ENCODE measurements at regions of chr12 and their contacts with region 1.

Region 1: GRCh38 chr12:1644534-1645438 is 15.8 kb downstream of the WNT5B start:
- DNase-seq: peak in 4 of 5 donors; percentile 56 to 91 (median 75)
- H3K4me3 ChIP-seq: no peak overlapping the region
- H3K27ac ChIP-seq: no peak overlapping the region
- H3K4me1 ChIP-seq: peaks cover 0 to 3% (median 0%) of the 10 kb centered on the region in 3 donors
- H3K27me3 ChIP-seq: no peaks in the 10 kb centered on the region
- CTCF ChIP-seq: no peak

Region 2: DNA sequence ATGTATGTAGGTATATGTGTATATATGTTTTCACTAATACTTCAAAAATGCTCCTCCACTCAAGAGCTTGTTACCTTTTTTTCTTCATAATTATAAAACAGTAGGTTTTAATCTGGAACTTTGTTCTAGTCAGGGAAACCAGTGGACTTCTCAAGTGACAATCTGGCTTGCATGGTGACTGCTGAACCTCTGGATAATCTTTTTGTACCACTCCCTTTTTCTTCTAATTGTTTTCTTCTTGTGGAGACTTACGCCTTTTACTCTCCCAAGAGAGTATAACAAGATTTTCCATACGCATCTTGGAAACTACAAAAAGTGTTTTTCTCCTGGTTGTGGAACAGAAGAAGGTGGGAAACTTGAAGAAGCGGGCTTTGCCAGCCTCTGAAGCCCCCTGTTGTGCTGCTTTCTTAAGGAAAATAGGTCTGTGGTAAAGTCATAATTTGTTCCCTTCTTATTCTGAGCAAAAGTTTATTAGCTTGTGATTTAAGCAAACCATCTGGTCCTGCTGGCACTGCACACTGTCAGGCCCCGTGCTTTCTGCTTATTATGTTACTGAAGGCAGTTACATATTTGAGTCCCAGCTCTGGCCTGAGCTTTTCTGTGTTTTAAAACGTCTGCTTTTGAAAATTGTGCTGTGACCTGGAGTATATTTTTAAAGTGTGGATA is 362.0 kb before region 1 on chr12:
- intact Hi-C with region 1: no loop called
- DNase-seq: peak in 2 of 5 donors; percentile 11 to 69
- H3K4me3 ChIP-seq: no peak overlapping the region
- H3K27ac ChIP-seq: no peak overlapping the region
- H3K4me1 ChIP-seq: no peaks in the 10 kb centered on the region
- H3K27me3 ChIP-seq: no peaks in the 10 kb centered on the region
- CTCF ChIP-seq: no peak

Region 3: DNA sequence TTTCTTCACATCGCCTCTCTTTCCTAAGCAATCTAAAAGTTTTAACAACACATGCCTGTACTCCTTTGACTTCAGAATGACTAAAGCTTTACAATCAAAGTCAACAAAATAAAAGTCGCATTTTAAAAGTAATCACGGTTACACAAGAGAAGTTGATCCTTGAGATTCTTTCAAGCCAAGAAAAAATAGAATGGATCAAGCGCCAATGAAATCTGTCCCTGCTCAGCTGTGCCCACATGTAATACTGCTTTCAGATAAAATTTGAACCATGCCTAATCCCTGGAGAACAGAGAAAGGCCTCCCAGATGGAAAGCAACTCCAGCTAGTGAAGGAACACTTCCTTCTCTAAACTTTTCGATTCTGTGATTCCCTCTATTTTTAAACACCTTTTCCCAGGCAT is 163.5 kb before region 1 on chr12:
- intact Hi-C with region 1: no loop called
- DNase-seq: no peak
- H3K4me3 ChIP-seq: no peak overlapping the region
- H3K27ac ChIP-seq: no peak overlapping the region
- H3K4me1 ChIP-seq: no peaks in the 10 kb centered on the region
- H3K27me3 ChIP-seq: no peaks in the 10 kb centered on the region
- CTCF ChIP-seq: no peak

Region 4: GRCh38 chr12:1916371-1917171 is 271.8 kb after region 1 on chr12:
- intact Hi-C with region 1: no loop called
- DNase-seq: peak in 1 of 5 donors; percentile 26
- H3K4me3 ChIP-seq: no peak overlapping the region
- H3K27ac ChIP-seq: no peak overlapping the region
- H3K4me1 ChIP-seq: no peaks in the 10 kb centered on the region
- H3K27me3 ChIP-seq: no peaks in the 10 kb centered on the region
- CTCF ChIP-seq: no peak

Region 5: DNA sequence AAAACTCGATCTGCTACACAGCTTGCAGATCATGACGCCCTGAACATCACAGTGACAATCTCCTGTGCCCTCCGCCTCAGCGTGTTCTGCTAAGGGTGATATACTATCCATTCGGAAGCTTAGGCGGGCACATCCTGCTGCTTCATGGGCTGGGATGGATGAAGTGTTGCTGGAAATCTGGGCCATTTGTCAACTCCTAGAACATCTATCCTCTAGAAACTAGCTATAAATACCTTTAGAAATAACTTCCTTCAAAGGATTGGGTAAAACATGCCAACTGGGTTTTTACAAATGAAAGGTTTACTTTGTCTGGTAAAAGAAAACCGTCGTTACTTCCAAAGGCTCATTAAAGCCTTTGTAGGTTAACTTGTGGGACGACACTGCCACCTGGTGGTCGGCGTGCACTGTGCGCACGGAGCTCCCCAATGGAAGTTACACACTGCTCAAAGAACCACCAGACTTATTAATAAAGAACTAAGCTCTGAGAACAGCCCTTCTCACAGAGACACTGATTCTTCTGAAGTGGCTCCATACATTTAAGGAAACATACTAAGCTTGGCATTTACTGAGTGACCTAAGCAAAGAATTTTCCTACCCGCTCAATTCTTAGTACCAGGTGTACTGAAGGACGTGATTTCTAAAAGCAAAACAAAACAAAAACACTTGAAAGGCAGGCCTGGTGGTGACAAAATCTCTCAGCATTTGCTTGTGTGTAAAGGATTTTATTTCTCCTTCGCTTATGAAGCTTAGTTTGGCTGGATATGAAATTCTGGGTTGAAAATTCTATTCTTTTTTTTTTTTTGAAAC is 295.2 kb after region 1 on chr12:
- intact Hi-C with region 1: loop called (anchors 10 kb)
- DNase-seq: peak; percentile 90 to 92 (median 92)
- H3K4me3 ChIP-seq: peak overlapping the region in 1 of 3 donors; percentile 2
- H3K27ac ChIP-seq: no peak overlapping the region
- H3K4me1 ChIP-seq: peaks cover 0 to 9% (median 5%) of the 10 kb centered on the region in 3 donors
- H3K27me3 ChIP-seq: no peaks in the 10 kb centered on the region
- CTCF ChIP-seq: peak; percentile 98

Measured in kidney (tissue), 22 donors.